ENCODE measurements at regions of chr6 and their contacts with region 1.

Region 1: GRCh38 chr6:36615018-36615761 is 21.0 kb downstream of the SRSF3 start:
- DNase-seq: no peak
- H3K4me3 ChIP-seq: no peak overlapping the region
- H3K27ac ChIP-seq: no peak overlapping the region
- H3K4me1 ChIP-seq: peaks cover 0 to 2% (median 0%) of the 10 kb centered on the region in 4 experiments; a peak in 1 of 7 replicates
- H3K27me3 ChIP-seq: no peaks in the 10 kb centered on the region
- CTCF ChIP-seq: peak; percentile 47 to 77 (median 75)
- EP300 ChIP-seq: no peak
- POLR2A ChIP-seq: no peak
- RAD21 ChIP-seq: peak; percentile 85 to 86

Region 2: GRCh38 chr6:36594029-36594815 is 21.0 kb before region 1 on chr6 and contains the start of gene SRSF3:
- CTCF ChIA-PET with region 1: interaction called, 6 read pairs
- POLR2A ChIA-PET with region 1: interaction called, 386 read pairs
- DNase-seq: peak; percentile 87 to 95
- H3K4me3 ChIP-seq: peak within 1 kb of the TSS; percentile 93 to 100 (median 96)
- H3K27ac ChIP-seq: peak within 1 kb of the TSS; percentile 97
- H3K4me1 ChIP-seq: peaks cover 0 to 3% (median 1%) of the 10 kb centered on the region in 4 experiments; a peak in 3 of 7 replicates
- H3K27me3 ChIP-seq: no peaks in the 10 kb centered on the region
- CTCF ChIP-seq: peak in 2 of 3 experiments; percentile 38 to 44; a peak in 3 of 4 replicates
- EP300 ChIP-seq: no peak; a peak in 1 of 3 replicates
- POLR2A ChIP-seq: peak; percentile 100
- RAD21 ChIP-seq: no peak; a peak in 1 of 4 replicates
- total RNA-seq, gene SRSF3: 689 and 705 TPM in 2 replicates

Region 3: GRCh38 chr6:36701401-36701991 is 86.3 kb after region 1 on chr6:
- CTCF ChIA-PET with region 1: interaction called, 11 read pairs
- POLR2A ChIA-PET with region 1: no interaction called
- DNase-seq: no peak
- H3K4me3 ChIP-seq: no peak overlapping the region
- H3K27ac ChIP-seq: no peak overlapping the region
- H3K4me1 ChIP-seq: no peaks in the 10 kb centered on the region
- H3K27me3 ChIP-seq: no peaks in the 10 kb centered on the region
- CTCF ChIP-seq: peak; percentile 74 to 88 (median 85)
- EP300 ChIP-seq: no peak
- POLR2A ChIP-seq: no peak
- RAD21 ChIP-seq: peak; percentile 89 to 92

Region 4: GRCh38 chr6:36735110-36736071 is 120.2 kb after region 1 on chr6:
- CTCF ChIA-PET with region 1: interaction called, 17 read pairs
- POLR2A ChIA-PET with region 1: no interaction called
- DNase-seq: no peak
- H3K4me3 ChIP-seq: no peak overlapping the region
- H3K27ac ChIP-seq: no peak overlapping the region
- H3K4me1 ChIP-seq: peaks cover 2 to 11% (median 6%) of the 10 kb centered on the region in 4 experiments; a peak in 5 of 7 replicates
- H3K27me3 ChIP-seq: no peaks in the 10 kb centered on the region; a peak in 1 of 7 replicates
- CTCF ChIP-seq: no peak
- EP300 ChIP-seq: no peak
- POLR2A ChIP-seq: no peak
- RAD21 ChIP-seq: no peak

Region 5: DNA sequence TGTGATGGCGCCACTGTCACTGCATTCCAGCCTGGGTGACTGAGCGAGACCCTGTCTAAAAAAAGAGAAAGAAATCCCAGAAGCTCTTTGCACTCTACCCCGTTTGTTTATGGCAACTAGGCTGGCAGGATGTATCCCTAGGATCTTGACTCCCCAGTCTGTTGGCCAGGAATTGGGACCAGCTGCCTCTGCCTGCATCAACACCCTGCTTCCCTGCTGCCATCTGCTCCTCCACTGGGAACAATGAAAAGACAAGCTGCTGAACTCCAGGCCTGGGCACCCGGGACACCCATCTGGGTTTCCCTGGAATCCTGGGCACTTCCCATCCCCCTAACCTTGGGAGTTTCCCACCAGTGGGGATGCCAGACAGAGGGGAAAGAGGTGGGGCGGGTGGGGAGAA is 159.1 kb after region 1 on chr6:
- CTCF ChIA-PET with region 1: interaction called, 10 read pairs
- POLR2A ChIA-PET with region 1: no interaction called
- DNase-seq: no peak
- H3K4me3 ChIP-seq: no peak overlapping the region
- H3K27ac ChIP-seq: no peak overlapping the region
- H3K4me1 ChIP-seq: peaks cover 4 to 28% (median 20%) of the 10 kb centered on the region in 4 experiments
- H3K27me3 ChIP-seq: peaks cover 0 to 4% (median 1%) of the 10 kb centered on the region in 4 experiments; a peak in 3 of 7 replicates
- CTCF ChIP-seq: no peak
- EP300 ChIP-seq: no peak
- POLR2A ChIP-seq: no peak
- RAD21 ChIP-seq: no peak

Region 6: GRCh38 chr6:37347670-37348111 is 732.5 kb after region 1 on chr6:
- CTCF ChIA-PET with region 1: no interaction called
- POLR2A ChIA-PET with region 1: no interaction called
- DNase-seq: no peak
- H3K4me3 ChIP-seq: no peak overlapping the region
- H3K27ac ChIP-seq: no peak overlapping the region
- H3K4me1 ChIP-seq: no peaks in the 10 kb centered on the region
- H3K27me3 ChIP-seq: no peaks in the 10 kb centered on the region; a peak in 2 of 7 replicates
- CTCF ChIP-seq: no peak
- EP300 ChIP-seq: no peak
- POLR2A ChIP-seq: no peak
- RAD21 ChIP-seq: no peak

Measured in H1 (cell line).